Heart right ventricle (tissue), 16 donors: ENCODE measurements at regions of chr1 and their contacts with region 1.

Region 1: DNA sequence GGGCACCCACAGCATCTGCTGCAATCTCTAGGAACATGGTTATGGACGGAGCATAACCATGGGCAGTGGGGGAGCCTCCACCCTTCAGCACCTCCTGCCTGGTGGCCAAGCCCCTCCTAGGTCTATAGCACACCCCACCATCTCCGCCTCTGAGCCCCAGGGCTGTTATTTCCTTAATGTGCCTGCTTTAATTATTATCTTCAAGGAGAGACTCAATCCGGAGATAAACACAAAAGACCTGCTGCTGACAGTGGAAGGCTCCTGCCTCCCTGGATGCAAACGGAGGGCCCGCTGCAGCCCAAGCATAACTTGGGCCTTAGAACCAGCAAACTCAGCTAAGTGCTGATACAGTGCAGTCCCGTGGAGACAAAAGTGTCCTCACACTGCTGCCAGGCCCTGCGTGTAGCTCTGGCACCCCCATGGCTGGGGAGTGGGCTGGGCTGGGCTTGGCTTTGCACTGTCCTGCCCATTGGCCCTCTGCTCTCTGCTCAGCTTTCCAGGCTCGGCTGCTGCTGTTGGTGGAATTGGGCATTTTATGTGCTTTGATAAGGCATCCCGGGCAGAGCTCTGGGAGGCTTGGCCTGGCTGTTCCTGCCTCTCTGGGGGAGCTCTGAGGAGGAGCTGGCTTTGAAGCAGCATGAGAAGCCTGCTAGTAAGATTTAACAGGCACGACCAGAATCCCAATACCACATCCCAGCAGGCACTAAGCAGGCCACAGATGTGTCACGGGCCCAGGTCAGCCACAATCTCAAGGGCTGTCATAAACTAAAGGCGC is 620.2 kb downstream of the PTPRU start:
- DNase-seq: no peak
- ATAC-seq: peak in 1 of 8 donors; percentile 16
- H3K4me3 ChIP-seq: no peak overlapping the region
- H3K27ac ChIP-seq: peak overlapping the region in 1 of 10 donors; percentile 24
- H3K4me1 ChIP-seq: peaks cover 0 to 65% (median 21%) of the 10 kb centered on the region in 9 donors
- H3K27me3 ChIP-seq: peaks cover 0 to 9% (median 0%) of the 10 kb centered on the region in 7 donors
- CTCF ChIP-seq: no peak

Region 2: DNA sequence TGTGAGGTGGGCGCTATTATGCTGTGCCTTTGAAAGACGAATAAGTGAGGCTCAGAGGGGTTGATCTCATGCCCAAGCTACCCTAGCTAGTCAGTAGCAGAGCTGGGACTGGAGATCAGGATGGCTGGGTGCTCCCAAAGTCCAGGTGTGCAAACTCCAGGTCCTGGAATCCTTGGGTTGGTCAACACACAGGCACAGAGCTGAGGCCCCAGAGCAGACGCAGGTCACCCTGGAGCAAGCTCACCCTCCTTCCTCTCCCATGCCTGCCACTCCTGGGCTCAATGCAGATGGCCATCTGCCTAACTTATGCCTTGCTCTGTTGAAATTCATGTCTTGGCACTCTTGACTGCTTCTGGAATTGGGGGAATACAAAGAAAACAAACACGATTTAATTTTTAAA is 33.0 kb before region 1 on chr1:
- intact Hi-C with region 1: loop called in 1 of 10 experiments (anchors 1 kb)
- DNase-seq: no peak
- ATAC-seq: no peak
- H3K4me3 ChIP-seq: no peak overlapping the region
- H3K27ac ChIP-seq: no peak overlapping the region
- H3K4me1 ChIP-seq: no peaks in the 10 kb centered on the region
- H3K27me3 ChIP-seq: peaks cover 0 to 48% (median 19%) of the 10 kb centered on the region in 7 donors
- CTCF ChIP-seq: no peak